ENCODE measurements at regions of chr7 and their contacts with region 1.

Region 1: DNA sequence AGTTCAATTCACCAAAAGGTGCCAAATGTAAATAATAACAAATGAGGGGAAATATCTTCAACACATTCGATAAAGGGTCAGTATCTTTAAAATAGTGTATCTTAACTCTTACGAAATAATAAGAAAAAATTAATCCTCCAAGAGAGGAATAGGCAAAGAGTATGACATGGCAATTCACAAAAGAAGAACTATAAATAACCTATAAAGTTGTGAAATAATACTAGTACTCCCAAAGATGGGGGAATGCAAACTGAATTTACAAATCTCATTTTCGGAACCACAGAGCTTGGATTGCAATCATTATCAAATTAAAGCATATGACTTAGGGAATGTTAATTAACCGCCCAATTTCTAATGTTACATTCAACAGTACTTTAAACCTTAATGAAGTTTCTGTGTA is 78.2 kb upstream of the TARP start:
- DNase-seq: no peak
- ATAC-seq: no peak
- H3K4me3 Mint-ChIP-seq: peak overlapping the region; percentile 87
- H3K27ac Mint-ChIP-seq: peak overlapping the region; percentile 92
- H3K4me1 Mint-ChIP-seq: peaks cover 50% of the 10 kb centered on the region
- H3K27me3 Mint-ChIP-seq: no peaks in the 10 kb centered on the region

Region 2: GRCh38 chr7:37510043-37510634 is 841.5 kb before region 1 on chr7:
- CTCF ChIA-PET with region 1: no interaction called
- POLR2A ChIA-PET with region 1: no interaction called
- DNase-seq: peak; percentile 31
- ATAC-seq: no peak
- H3K4me3 Mint-ChIP-seq: no peak overlapping the region
- H3K27ac Mint-ChIP-seq: no peak overlapping the region
- H3K4me1 Mint-ChIP-seq: no peaks in the 10 kb centered on the region
- H3K27me3 Mint-ChIP-seq: peaks cover 20% of the 10 kb centered on the region

Region 3: DNA sequence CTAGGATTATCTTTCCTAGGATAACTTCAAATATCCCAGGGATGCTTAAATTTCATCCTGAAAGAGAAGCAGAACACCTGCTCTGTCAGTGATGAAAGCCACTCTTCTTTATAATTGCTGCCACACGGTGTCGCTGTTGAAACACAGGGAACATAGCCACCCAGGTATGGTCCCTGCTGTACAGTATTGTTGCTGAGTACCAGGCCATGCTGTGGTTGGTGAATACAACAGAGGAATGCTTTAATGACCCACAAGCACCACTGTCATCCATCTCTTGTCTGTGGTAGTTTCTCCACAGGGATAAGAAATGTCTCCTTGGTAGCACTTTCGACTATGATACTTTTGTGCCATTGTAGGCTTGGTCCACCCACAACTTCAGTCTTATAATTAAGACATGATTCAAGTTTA is 244.1 kb before region 1 on chr7:
- CTCF ChIA-PET with region 1: interaction called, 15 read pairs
- POLR2A ChIA-PET with region 1: no interaction called
- DNase-seq: peak; percentile 78
- ATAC-seq: peak; percentile 88
- H3K4me3 Mint-ChIP-seq: no peak overlapping the region
- H3K27ac Mint-ChIP-seq: no peak overlapping the region
- H3K4me1 Mint-ChIP-seq: no peaks in the 10 kb centered on the region
- H3K27me3 Mint-ChIP-seq: peaks cover 27% of the 10 kb centered on the region

Region 4: GRCh38 chr7:38222481-38223096 is 129.0 kb before region 1 on chr7:
- CTCF ChIA-PET with region 1: interaction called, 47 read pairs
- POLR2A ChIA-PET with region 1: no interaction called
- DNase-seq: peak; percentile 57
- ATAC-seq: peak; percentile 56
- H3K4me3 Mint-ChIP-seq: no peak overlapping the region
- H3K27ac Mint-ChIP-seq: no peak overlapping the region
- H3K4me1 Mint-ChIP-seq: peaks cover 76% of the 10 kb centered on the region
- H3K27me3 Mint-ChIP-seq: no peaks in the 10 kb centered on the region

Measured in activated CD8-positive, alpha-beta T cell treated with anti-CD3 and anti-CD28 coated beads, Interleukin-2, amount 10 ng/mL, durations not matched to agents 7 days and 5 days (primary cell).